Heart right ventricle (tissue), 16 donors: ENCODE measurements at regions of chr6 and their contacts with region 1.

Region 1: DNA sequence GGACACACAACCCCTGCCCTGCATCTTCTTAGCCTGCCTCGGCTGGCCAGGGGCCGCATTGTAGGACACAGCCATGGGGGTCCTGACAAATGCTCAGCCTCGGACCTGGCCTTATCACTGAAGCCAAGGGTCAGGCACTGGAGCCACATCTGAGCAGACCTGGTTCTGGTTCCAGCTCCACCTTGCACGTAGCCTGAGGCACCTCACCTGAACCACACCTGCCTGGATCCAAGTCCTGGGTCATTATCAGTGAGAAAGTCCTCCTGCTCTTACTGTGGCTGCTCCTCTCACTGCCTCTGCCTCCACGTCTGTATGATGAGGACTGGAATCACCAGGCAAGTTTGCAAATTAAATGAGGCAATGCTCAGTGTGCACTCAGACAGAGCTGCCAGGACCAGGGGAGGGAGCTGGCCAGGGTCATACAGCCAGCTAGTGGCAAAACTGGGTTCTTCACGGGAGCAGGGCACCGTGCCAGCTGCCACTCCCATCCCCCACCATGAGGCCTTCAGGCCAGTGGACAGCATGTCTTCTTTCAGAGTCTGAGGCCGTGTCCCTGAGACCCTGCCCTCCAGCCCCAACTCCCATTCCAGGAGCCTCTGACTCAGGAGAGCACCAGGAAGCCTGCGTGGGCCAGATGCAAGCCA is 40.2 kb downstream of the MRPL14 start:
- DNase-seq: peak in 1 of 2 donors; percentile 67
- ATAC-seq: peak in 7 of 8 donors; percentile 22 to 61 (median 34)
- H3K4me3 ChIP-seq: no peak overlapping the region
- H3K27ac ChIP-seq: peak overlapping the region in 1 of 10 donors; percentile 13
- H3K4me1 ChIP-seq: peaks cover 0 to 36% (median 13%) of the 10 kb centered on the region in 9 donors
- H3K27me3 ChIP-seq: no peaks in the 10 kb centered on the region
- CTCF ChIP-seq: peak in 1 of 9 donors; percentile 10

Region 2: DNA sequence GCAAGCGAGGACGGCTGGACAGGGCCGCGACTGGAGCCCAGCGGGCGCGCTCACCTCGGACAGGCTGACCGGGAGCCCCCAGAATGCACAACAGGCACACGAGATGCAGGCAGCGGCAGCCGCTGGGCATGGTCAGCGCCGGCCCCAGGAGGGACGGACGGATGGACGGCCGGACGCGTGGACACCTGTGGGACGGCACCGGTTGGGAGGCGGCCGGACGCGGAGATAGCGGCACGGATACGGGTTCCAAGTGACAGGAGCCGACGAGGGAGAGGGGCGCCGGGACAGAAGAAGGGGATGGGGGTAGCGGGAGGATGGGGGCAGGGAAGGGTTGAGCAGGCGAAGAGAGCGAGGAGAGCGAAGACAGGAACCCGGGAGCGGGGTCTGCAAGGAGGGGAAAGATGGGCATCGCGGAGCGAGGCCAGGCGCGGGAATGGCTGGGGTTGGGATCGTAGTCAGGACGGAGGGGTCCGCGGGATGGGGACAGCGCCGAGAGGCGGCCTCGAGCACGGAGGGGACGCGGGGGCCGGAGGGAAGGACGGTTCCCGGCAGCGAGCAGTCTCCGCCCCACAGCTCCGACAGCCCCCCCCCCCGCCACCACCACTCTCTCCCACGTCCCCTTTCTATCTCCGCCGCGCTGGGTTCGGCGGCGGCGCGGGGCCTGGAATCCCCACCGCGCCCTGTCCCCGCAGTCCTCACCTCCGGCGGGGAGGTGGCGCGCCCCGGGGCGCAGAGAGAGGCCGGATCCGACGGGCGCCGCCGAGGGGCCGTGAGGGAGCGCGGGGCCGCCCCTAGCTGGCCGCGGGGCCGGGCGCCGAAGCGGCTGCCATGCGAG is 632.1 kb before region 1 on chr6:
- intact Hi-C with region 1: no loop called
- DNase-seq: peak; percentile 85 to 87
- ATAC-seq: peak; percentile 86 to 92 (median 90)
- H3K4me3 ChIP-seq: peak overlapping the region; percentile 28 to 60 (median 56)
- H3K27ac ChIP-seq: peak overlapping the region in 2 of 10 donors; percentile 13 to 62
- H3K4me1 ChIP-seq: peaks cover 0 to 22% (median 12%) of the 10 kb centered on the region in 9 donors
- H3K27me3 ChIP-seq: peaks cover 0 to 53% (median 12%) of the 10 kb centered on the region in 7 donors
- CTCF ChIP-seq: peak in 3 of 9 donors; percentile 2 to 32 (median 3)

Region 3: GRCh38 chr6:43608310-43608763 is 478.7 kb before region 1 on chr6:
- intact Hi-C with region 1: loop called in 2 of 10 experiments (anchors 10 kb)
- DNase-seq: peak in 1 of 2 donors; percentile 65
- ATAC-seq: peak in 7 of 8 donors; percentile 38 to 73 (median 61)
- H3K4me3 ChIP-seq: no peak overlapping the region
- H3K27ac ChIP-seq: no peak overlapping the region
- H3K4me1 ChIP-seq: peaks cover 0 to 13% (median 0%) of the 10 kb centered on the region in 9 donors
- H3K27me3 ChIP-seq: no peaks in the 10 kb centered on the region
- CTCF ChIP-seq: peak; percentile 61 to 87 (median 78)

Region 4: GRCh38 chr6:44002593-44003344 is 84.3 kb before region 1 on chr6:
- intact Hi-C with region 1: no loop called
- DNase-seq: peak; percentile 44 to 64
- ATAC-seq: peak; percentile 15 to 59 (median 36)
- H3K4me3 ChIP-seq: peak overlapping the region; percentile 6 to 45 (median 40)
- H3K27ac ChIP-seq: peak overlapping the region in 9 of 10 donors; percentile 53 to 95 (median 90)
- H3K4me1 ChIP-seq: peaks cover 8 to 64% (median 25%) of the 10 kb centered on the region in 9 donors
- H3K27me3 ChIP-seq: peaks cover 0 to 75% (median 27%) of the 10 kb centered on the region in 7 donors
- CTCF ChIP-seq: peak in 4 of 9 donors; percentile 21 to 43 (median 34)